Activated B cell treated with CpG ODN at 0.5 μM for 24 hours (primary cell): ENCODE measurements at regions of chrX and their contacts with region 1.

Region 1: DNA sequence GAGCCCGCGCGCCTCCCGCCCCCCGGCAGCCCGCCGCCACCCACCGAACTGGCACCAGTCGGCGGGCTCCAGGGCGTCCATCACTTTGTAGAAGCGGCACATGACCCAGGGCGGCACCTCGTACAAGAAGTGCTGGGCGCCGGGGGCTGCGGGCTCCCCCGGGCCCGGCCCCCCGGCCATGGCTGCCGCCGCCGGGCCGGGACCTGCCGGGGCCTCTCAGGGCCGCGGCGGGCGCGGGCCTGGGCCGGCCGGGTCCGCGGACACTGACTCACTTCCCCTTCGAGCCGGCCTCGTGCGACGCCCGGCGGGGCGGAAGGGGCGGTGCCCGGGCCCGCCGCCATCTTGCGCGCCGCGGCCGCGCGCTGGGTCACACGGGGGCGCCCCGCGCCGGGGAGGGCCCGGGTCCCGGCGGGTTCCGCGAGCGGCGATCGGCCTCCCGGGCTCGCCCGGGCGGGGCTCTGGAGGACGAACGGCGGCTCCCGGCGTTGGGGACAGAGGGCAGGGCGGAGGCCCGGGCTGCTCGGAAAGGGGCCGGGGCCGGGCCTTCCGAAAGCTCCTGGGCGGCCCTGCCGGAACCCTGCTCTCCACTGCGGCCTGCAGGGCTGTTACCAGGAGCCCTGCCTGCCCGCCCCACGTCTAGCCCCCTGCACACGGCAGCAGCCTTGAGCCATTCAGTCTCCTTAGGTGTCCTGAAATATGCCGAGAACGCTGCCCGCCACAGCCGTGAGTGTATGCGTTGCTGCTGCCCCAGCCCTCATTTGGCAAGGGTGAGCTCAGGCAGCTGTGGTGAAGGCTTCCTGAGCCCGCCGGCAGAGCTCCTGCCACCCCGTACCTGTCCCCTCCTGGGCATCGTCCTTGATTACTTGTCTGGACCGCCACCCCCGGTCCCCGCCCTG is at the start of gene IRAK1:
- DNase-seq: peak; percentile 68
- ATAC-seq: peak; percentile 78
- H3K4me3 Mint-ChIP-seq: peak within 1 kb of the TSS; percentile 86
- H3K27ac Mint-ChIP-seq: peak within 1 kb of the TSS; percentile 87
- H3K4me1 Mint-ChIP-seq: peaks cover 25% of the 10 kb centered on the region
- H3K27me3 Mint-ChIP-seq: no peaks in the 10 kb centered on the region
- CTCF ChIP-seq: no peak
- total RNA-seq, gene IRAK1: 134 and 146 TPM in 2 replicates

Region 2: DNA sequence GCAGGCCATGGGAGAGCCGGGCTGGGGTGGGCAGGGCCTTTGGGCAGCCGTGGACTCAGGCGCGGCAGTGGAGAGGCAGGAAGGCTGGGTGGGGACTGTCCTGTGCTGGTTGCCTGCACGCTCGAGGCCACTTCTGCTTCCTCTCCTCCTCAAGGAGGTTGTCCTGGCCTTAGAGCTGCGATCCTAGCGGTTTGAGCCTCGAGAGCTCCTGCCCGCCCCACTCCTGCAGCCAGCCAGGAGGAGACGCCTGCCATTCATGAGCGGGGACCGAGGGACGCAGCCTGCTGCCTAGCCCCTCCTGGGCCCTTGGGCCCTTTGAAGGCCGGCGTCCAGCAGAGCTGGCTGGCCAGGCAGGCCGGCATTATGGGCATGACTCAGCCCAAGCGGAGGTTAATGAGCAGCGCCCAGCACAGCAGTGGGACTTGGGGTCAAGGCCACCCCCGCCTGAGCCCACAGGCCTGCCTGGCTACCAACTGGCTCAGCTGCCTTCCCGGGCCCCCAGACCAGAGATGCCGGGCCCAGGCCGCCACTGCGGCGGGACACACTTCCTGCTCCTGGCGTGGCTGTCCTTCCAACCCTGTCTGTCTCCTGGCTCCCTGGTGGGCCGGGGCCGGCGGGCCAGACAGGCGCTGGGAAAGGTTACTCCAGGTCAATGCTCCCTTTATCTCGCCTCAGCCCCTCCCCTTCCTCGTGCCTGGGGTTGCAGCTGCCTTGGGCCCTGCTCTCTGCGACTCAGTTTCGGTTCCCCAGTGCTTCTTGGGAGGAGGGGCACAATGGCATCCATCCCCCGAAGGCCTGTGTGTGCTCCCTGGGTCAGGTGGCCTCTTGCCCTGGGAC is 293.4 kb before region 1 on chrX:
- CTCF ChIA-PET with region 1: no interaction called
- POLR2A ChIA-PET with region 1: no interaction called
- intact Hi-C with region 1: no loop called
- DNase-seq: peak; percentile 59
- ATAC-seq: peak; percentile 50
- H3K4me3 Mint-ChIP-seq: peak overlapping the region; percentile 70
- H3K27ac Mint-ChIP-seq: peak overlapping the region; percentile 56
- H3K4me1 Mint-ChIP-seq: peaks cover 55% of the 10 kb centered on the region
- H3K27me3 Mint-ChIP-seq: no peaks in the 10 kb centered on the region
- CTCF ChIP-seq: no peak

Region 3: GRCh38 chrX:154002215-154002719 is 17.6 kb before region 1 on chrX:
- CTCF ChIA-PET with region 1: interaction called, 3 read pairs
- POLR2A ChIA-PET with region 1: interaction called, 21 read pairs
- intact Hi-C with region 1: loop called (anchors 2 kb)
- DNase-seq: peak; percentile 27
- ATAC-seq: peak; percentile 73
- H3K4me3 Mint-ChIP-seq: peak overlapping the region; percentile 77
- H3K27ac Mint-ChIP-seq: peak overlapping the region; percentile 85
- H3K4me1 Mint-ChIP-seq: peaks cover 49% of the 10 kb centered on the region
- H3K27me3 Mint-ChIP-seq: no peaks in the 10 kb centered on the region
- CTCF ChIP-seq: no peak

Region 4: GRCh38 chrX:154008521-154008920 is 11.4 kb before region 1 on chrX:
- CTCF ChIA-PET with region 1: no interaction called
- POLR2A ChIA-PET with region 1: interaction called, 21 read pairs
- intact Hi-C with region 1: loop called (anchors 1 kb)
- DNase-seq: no peak
- ATAC-seq: no peak
- H3K4me3 Mint-ChIP-seq: peak overlapping the region; percentile 73
- H3K27ac Mint-ChIP-seq: peak overlapping the region; percentile 96
- H3K4me1 Mint-ChIP-seq: peaks cover 59% of the 10 kb centered on the region
- H3K27me3 Mint-ChIP-seq: no peaks in the 10 kb centered on the region
- CTCF ChIP-seq: no peak

Region 5: DNA sequence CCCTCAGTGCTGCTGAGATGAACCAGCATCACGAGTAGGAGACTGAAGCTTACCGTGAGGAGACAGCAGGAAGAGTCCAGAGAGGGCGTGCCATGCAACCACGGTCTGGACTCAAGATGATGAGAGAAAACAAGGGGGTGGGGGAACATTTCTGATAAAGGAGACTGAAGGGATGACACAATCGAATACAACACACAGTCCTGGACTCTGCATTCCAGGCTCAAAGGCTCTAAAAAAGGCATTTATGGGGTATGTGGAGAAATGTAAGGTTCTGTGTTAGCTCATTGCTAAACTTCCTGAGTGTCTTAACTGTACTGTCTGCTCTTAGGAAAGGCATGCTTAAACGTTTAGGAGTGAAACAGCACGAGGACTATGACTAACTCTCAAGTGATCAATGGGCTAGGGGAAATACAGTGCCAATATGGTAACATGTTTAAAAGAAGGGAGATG is 20.5 kb after region 1 on chrX:
- CTCF ChIA-PET with region 1: no interaction called
- POLR2A ChIA-PET with region 1: no interaction called
- intact Hi-C with region 1: loop called (anchors 2 kb)
- DNase-seq: no peak
- ATAC-seq: peak; percentile 37
- H3K4me3 Mint-ChIP-seq: no peak overlapping the region
- H3K27ac Mint-ChIP-seq: peak overlapping the region; percentile 25
- H3K4me1 Mint-ChIP-seq: peaks cover 41% of the 10 kb centered on the region
- H3K27me3 Mint-ChIP-seq: no peaks in the 10 kb centered on the region
- CTCF ChIP-seq: no peak

Region 6: DNA sequence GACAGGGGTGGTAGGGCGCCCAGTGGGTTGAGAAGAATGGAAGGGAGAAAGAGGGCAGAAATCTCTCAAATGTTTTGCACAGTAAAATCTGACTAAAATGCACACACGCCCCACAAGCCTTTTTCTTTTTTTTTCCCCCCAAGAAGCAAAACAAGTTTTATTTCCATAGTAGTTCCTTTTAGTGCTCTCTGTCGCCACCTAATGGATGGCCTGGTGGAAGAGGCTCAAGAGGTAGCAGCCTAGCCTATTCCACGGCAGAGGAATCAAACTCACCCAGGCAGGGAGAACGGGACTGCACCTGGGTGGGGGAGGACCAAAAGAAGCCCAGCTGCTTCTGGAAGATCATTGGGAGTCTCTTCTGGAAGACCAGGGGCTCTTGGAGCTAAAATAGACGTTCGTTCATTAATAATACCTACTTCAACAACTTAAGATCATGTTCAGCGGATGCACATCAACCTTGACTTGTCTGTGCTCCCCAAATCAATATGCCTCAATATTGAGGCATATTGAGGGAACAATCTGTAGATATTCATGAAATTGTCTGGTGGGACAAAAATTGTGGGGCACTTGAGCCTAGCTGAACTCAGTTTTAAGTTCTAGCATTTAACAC is 31.4 kb after region 1 on chrX:
- CTCF ChIA-PET with region 1: no interaction called
- POLR2A ChIA-PET with region 1: no interaction called
- intact Hi-C with region 1: loop called (anchors 2 kb)
- DNase-seq: peak; percentile 24
- ATAC-seq: peak; percentile 73
- H3K4me3 Mint-ChIP-seq: no peak overlapping the region
- H3K27ac Mint-ChIP-seq: no peak overlapping the region
- H3K4me1 Mint-ChIP-seq: peaks cover 10% of the 10 kb centered on the region
- H3K27me3 Mint-ChIP-seq: no peaks in the 10 kb centered on the region
- CTCF ChIP-seq: no peak

Region 7: GRCh38 chrX:154097597-154098541 is 78.0 kb after region 1 on chrX and contains the start of gene MECP2:
- CTCF ChIA-PET with region 1: no interaction called
- POLR2A ChIA-PET with region 1: no interaction called
- intact Hi-C with region 1: loop called (anchors 2 kb)
- DNase-seq: peak; percentile 75
- ATAC-seq: peak; percentile 93
- H3K4me3 Mint-ChIP-seq: peak within 1 kb of the TSS; percentile 90
- H3K27ac Mint-ChIP-seq: peak within 1 kb of the TSS; percentile 85
- H3K4me1 Mint-ChIP-seq: peaks cover 39% of the 10 kb centered on the region
- H3K27me3 Mint-ChIP-seq: peaks cover 2% of the 10 kb centered on the region
- CTCF ChIP-seq: no peak
- total RNA-seq, gene MECP2: 56.8 and 69.0 TPM in 2 replicates